ENCODE measurements at regions of chr22 and their contacts with region 1.

Region 1: GRCh38 chr22:46035742-46036557 is 59.0 kb upstream of the WNT7B start:
- DNase-seq: peak; percentile 99 to 100 (median 100)
- H3K4me3 ChIP-seq: peak overlapping the region; percentile 76
- H3K4me3 Mint-ChIP-seq: peak overlapping the region; percentile 81 to 91 (median 85)
- H3K27ac ChIP-seq: peak overlapping the region; percentile 89
- H3K27ac Mint-ChIP-seq: peak overlapping the region; percentile 94 to 98 (median 97)
- H3K4me1 ChIP-seq: peaks cover 20% of the 10 kb centered on the region
- H3K4me1 Mint-ChIP-seq: peaks cover 19 to 21% (median 19%) of the 10 kb centered on the region in 3 donors
- H3K27me3 ChIP-seq: no peaks in the 10 kb centered on the region
- H3K27me3 Mint-ChIP-seq: no peaks in the 10 kb centered on the region

Region 2: GRCh38 chr22:46054091-46055073 is 18.4 kb after region 1 on chr22:
- CTCF ChIA-PET with region 1: interaction called, 9 read pairs
- POLR2A ChIA-PET with region 1: interaction called, 43 read pairs
- DNase-seq: peak in 4 of 5 donors; percentile 23 to 63 (median 55)
- H3K4me3 ChIP-seq: peak overlapping the region; percentile 76
- H3K4me3 Mint-ChIP-seq: peak overlapping the region; percentile 85 to 90 (median 88)
- H3K27ac ChIP-seq: peak overlapping the region; percentile 47
- H3K27ac Mint-ChIP-seq: peak overlapping the region; percentile 87 to 95 (median 90)
- H3K4me1 ChIP-seq: peaks cover 57% of the 10 kb centered on the region
- H3K4me1 Mint-ChIP-seq: peaks cover 36 to 63% (median 43%) of the 10 kb centered on the region in 3 donors
- H3K27me3 ChIP-seq: no peaks in the 10 kb centered on the region
- H3K27me3 Mint-ChIP-seq: peaks cover under 1 to 3% of the 10 kb centered on the region in 2 donors

Region 3: DNA sequence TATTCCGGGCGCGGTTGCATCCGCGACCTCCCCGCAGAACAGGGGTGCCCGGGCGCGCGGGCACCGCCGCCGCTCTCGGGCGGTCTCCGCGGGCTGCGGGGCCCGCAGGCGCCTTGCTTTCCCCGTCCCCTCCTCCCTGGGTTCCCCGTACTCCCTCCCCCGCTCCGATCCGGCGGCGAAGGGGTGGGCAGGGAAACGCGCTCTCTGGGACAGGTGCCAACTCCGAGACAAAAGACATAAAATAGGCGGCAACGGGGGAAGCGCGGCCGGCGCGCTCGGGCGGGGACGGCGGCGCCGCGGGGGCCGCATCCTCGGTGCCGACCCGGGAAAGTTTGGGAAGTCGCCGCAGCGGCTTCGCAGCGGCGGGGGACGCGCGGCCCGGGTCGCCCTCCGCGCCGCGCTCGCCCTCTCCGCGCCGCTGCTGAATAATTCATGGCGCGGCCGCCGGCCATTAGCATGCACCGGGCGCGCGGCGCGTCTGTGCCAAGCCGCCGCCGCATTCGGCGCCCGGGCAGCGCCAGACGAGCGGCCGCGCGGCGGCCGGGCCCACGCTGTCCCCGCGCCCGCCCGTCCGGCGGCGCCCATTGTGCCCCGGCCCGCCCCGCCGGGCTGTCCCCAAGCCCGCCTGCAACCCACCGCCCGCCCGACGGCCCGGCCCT is 35.6 kb after region 1 on chr22:
- CTCF ChIA-PET with region 1: no interaction called
- POLR2A ChIA-PET with region 1: no interaction called
- DNase-seq: peak in 2 of 5 donors; percentile 47 to 61
- H3K4me3 ChIP-seq: peak overlapping the region; percentile 41
- H3K4me3 Mint-ChIP-seq: peak overlapping the region; percentile 67 to 87 (median 75)
- H3K27ac ChIP-seq: no peak overlapping the region
- H3K27ac Mint-ChIP-seq: no peak overlapping the region
- H3K4me1 ChIP-seq: peaks cover 25% of the 10 kb centered on the region
- H3K4me1 Mint-ChIP-seq: peaks cover 23 to 59% (median 29%) of the 10 kb centered on the region in 3 donors
- H3K27me3 ChIP-seq: no peaks in the 10 kb centered on the region
- H3K27me3 Mint-ChIP-seq: peaks cover 6 to 7% of the 10 kb centered on the region in 2 donors

Region 4: GRCh38 chr22:46116491-46116958 is 80.6 kb after region 1 on chr22:
- CTCF ChIA-PET with region 1: interaction called, 13 read pairs
- POLR2A ChIA-PET with region 1: no interaction called
- DNase-seq: peak; percentile 68 to 90 (median 79)
- H3K4me3 ChIP-seq: no peak overlapping the region
- H3K4me3 Mint-ChIP-seq: no peak overlapping the region
- H3K27ac ChIP-seq: no peak overlapping the region
- H3K27ac Mint-ChIP-seq: peak overlapping the region in 1 of 8 donors; percentile 14
- H3K4me1 ChIP-seq: no peaks in the 10 kb centered on the region
- H3K4me1 Mint-ChIP-seq: peaks cover 0 to 5% (median 3%) of the 10 kb centered on the region in 3 donors
- H3K27me3 ChIP-seq: no peaks in the 10 kb centered on the region
- H3K27me3 Mint-ChIP-seq: no peaks in the 10 kb centered on the region

Measured in CD8-positive, alpha-beta memory T cell (primary cell).